Natural killer cell (primary cell): ENCODE measurements at regions of chr3 and their contacts with region 1.

Region 1: DNA sequence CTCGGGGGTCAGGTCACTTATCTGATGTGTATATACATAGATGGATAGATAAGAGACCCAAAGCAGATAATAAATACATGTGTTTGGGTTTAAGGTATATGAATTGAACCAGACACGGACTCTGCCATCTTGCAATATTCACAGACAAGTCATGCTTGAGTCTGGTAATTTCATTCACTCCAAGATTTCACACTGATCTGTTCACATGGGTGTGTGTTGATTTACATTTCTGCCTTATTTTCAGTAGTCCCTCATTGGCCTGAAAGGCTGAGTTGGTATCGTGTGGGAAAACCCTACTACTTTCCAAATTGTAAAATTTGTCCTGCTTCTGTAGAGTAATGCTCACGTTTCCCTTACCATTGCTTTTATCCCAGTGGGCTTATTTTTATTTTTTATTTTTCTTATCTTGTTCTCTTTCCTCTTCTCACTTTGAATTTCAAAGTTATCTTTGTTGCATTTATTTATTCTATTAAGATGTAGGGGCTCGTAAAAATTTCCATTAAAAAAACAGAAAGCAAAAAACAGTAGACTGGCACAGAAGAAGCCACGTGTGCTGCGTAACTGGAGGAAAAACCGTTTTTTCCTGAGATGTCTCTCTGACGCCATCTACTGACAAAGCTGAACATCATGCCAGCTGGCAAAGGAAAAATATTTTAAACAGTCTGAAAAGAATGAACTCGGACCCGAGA is 10.8 kb upstream of the MFSD1 start:
- DNase-seq: peak in 1 of 2 donors; percentile 78
- ATAC-seq: peak; percentile 59 to 72 (median 59)
- H3K4me3 ChIP-seq: no peak overlapping the region
- H3K4me3 Mint-ChIP-seq: peak overlapping the region; percentile 68
- H3K27ac ChIP-seq: no peak overlapping the region
- H3K27ac Mint-ChIP-seq: no peak overlapping the region
- H3K4me1 ChIP-seq: no peaks in the 10 kb centered on the region
- H3K4me1 Mint-ChIP-seq: peaks cover 4 to 5% of the 10 kb centered on the region in 2 donors
- H3K27me3 ChIP-seq: no peaks in the 10 kb centered on the region
- H3K27me3 Mint-ChIP-seq: no peaks in the 10 kb centered on the region
- CTCF ChIP-seq: peak; percentile 78

Region 2: GRCh38 chr3:158221426-158221825 is 569.6 kb before region 1 on chr3:
- intact Hi-C with region 1: no loop called
- DNase-seq: no peak
- ATAC-seq: no peak
- H3K4me3 ChIP-seq: no peak overlapping the region
- H3K4me3 Mint-ChIP-seq: no peak overlapping the region
- H3K27ac ChIP-seq: no peak overlapping the region
- H3K27ac Mint-ChIP-seq: no peak overlapping the region
- H3K4me1 ChIP-seq: no peaks in the 10 kb centered on the region
- H3K4me1 Mint-ChIP-seq: no peaks in the 10 kb centered on the region
- H3K27me3 ChIP-seq: no peaks in the 10 kb centered on the region
- H3K27me3 Mint-ChIP-seq: no peaks in the 10 kb centered on the region
- CTCF ChIP-seq: no peak

Region 3: GRCh38 chr3:158539414-158540014 is 251.5 kb before region 1 on chr3:
- intact Hi-C with region 1: loop called (anchors 5 kb)
- DNase-seq: peak in 1 of 2 donors; percentile 69
- ATAC-seq: peak in 1 of 3 donors; percentile 54
- H3K4me3 ChIP-seq: no peak overlapping the region
- H3K4me3 Mint-ChIP-seq: no peak overlapping the region
- H3K27ac ChIP-seq: no peak overlapping the region
- H3K27ac Mint-ChIP-seq: no peak overlapping the region
- H3K4me1 ChIP-seq: no peaks in the 10 kb centered on the region
- H3K4me1 Mint-ChIP-seq: no peaks in the 10 kb centered on the region
- H3K27me3 ChIP-seq: no peaks in the 10 kb centered on the region
- H3K27me3 Mint-ChIP-seq: no peaks in the 10 kb centered on the region
- CTCF ChIP-seq: peak; percentile 28

Region 4: GRCh38 chr3:158659454-158660237 is 131.4 kb before region 1 on chr3:
- intact Hi-C with region 1: loop called (anchors 1 kb)
- DNase-seq: peak in 1 of 2 donors; percentile 67
- ATAC-seq: peak; percentile 54 to 88 (median 76)
- H3K4me3 ChIP-seq: no peak overlapping the region
- H3K4me3 Mint-ChIP-seq: no peak overlapping the region
- H3K27ac ChIP-seq: no peak overlapping the region
- H3K27ac Mint-ChIP-seq: no peak overlapping the region
- H3K4me1 ChIP-seq: no peaks in the 10 kb centered on the region
- H3K4me1 Mint-ChIP-seq: peaks cover 0 to 9% of the 10 kb centered on the region in 2 donors
- H3K27me3 ChIP-seq: no peaks in the 10 kb centered on the region
- H3K27me3 Mint-ChIP-seq: no peaks in the 10 kb centered on the region
- CTCF ChIP-seq: peak; percentile 57

Region 5: GRCh38 chr3:158727206-158728060 is 63.6 kb before region 1 on chr3:
- intact Hi-C with region 1: loop called (anchors 1 kb)
- DNase-seq: peak in 1 of 2 donors; percentile 77
- ATAC-seq: peak; percentile 68 to 80 (median 71)
- H3K4me3 ChIP-seq: no peak overlapping the region
- H3K4me3 Mint-ChIP-seq: peak overlapping the region; percentile 71
- H3K27ac ChIP-seq: no peak overlapping the region
- H3K27ac Mint-ChIP-seq: peak overlapping the region in 1 of 2 donors; percentile 47
- H3K4me1 ChIP-seq: peaks cover 13% of the 10 kb centered on the region
- H3K4me1 Mint-ChIP-seq: peaks cover 22 to 23% of the 10 kb centered on the region in 2 donors
- H3K27me3 ChIP-seq: no peaks in the 10 kb centered on the region
- H3K27me3 Mint-ChIP-seq: no peaks in the 10 kb centered on the region
- CTCF ChIP-seq: peak; percentile 80